Activated CD8-positive, alpha-beta T cell treated with anti-CD3 and anti-CD28 coated beads for 36 hours (primary cell): ENCODE measurements at regions of chr16 and their contacts with region 1.

Region 1: DNA sequence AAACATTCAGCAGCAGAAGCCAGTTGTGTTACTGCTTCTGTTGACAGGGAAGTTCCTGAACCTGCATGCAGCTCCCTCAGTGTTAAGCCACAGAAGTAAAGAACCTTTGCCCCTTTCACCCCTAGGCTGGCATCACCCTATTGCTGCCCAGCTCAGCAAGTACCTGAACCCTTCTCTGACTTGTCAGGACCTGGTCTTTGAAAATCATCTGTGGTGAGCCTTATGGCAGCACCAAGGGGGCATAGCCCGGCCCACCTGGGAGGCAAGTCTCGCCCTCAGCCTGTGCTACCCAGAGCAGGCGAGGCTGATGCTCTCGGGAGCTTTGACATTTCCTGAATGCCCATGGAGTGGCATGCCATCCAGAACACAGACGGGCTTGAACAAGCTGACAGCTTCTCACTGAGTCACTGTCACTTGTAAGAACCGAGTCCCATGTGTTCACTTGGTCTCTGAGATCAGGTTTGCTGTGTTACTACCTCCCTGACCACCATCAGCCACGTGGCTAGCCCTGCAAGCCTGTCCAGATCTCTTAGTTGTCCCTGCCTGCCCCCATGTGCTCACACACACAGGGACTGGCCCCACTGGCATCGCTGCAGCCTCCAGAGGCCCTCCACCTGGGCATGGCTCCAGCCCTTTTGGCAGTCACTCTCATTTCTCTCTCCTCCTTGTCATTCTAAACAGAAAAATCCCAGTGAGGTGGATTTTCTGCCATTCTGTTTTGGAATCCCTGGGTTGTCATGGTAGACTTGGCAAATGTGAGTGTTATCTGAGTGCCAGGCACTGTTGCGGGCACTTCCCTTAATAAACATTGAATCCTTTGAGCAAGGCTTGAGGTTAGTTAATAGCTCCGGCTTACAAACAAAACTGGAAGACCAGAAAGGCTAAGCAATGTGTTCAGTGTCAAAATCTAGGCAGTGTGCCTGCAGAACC is 2.9 kb upstream of the CARMIL2 start:
- DNase-seq: no peak
- ATAC-seq: no peak
- H3K4me3 Mint-ChIP-seq: no peak overlapping the region
- H3K27ac Mint-ChIP-seq: no peak overlapping the region
- H3K4me1 Mint-ChIP-seq: peaks cover 11% of the 10 kb centered on the region
- H3K27me3 Mint-ChIP-seq: no peaks in the 10 kb centered on the region
- CTCF ChIP-seq: no peak

Region 2: DNA sequence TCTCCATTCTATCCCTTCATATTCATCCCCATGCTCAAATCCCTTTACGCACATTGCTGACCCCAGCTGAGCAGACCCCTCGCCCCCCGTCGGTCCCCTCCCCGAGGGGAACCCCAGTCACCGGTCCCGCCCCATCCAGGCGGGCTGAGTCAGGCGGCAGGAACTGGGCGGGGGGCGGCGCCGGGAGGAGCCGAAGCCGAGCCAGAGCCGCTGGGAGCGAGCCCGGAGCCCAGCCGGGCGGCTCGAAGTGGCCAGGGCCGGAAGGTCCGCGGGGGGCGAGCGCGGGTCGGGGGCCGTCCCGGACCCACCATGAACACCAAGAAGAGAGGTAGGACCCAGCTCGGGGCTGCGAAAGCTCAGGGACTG is 104.8 kb before region 1 on chr16:
- CTCF ChIA-PET with region 1: interaction called, 12 read pairs
- POLR2A ChIA-PET with region 1: interaction called, 6 read pairs
- intact Hi-C with region 1: no loop called
- DNase-seq: peak; percentile 60
- ATAC-seq: peak; percentile 55
- H3K4me3 Mint-ChIP-seq: peak overlapping the region; percentile 74
- H3K27ac Mint-ChIP-seq: peak overlapping the region; percentile 73
- H3K4me1 Mint-ChIP-seq: peaks cover 31% of the 10 kb centered on the region
- H3K27me3 Mint-ChIP-seq: peaks cover 11% of the 10 kb centered on the region
- CTCF ChIP-seq: no peak

Region 3: DNA sequence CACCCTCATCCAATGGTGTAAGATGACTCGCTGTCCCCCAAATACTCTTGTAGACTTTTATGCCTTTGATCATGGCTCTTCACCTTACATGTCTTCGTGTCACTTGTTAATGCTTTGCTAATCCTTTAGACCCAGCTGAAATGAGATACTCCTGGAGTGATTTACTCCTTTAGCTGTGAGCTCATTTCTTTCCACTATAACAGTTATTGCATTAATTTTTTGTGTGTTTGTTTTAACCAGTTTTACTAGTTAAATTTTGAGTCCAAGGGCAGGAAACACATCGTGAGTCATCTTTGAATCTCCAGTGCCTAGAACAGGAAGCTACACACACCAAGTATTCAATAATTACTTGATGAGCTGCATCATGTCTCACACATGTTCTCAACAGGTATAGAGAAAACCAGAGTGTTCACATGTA is 86.2 kb before region 1 on chr16:
- CTCF ChIA-PET with region 1: interaction called, 43 read pairs
- POLR2A ChIA-PET with region 1: interaction called, 22 read pairs
- intact Hi-C with region 1: no loop called
- DNase-seq: no peak
- ATAC-seq: peak; percentile 94
- H3K4me3 Mint-ChIP-seq: peak overlapping the region; percentile 66
- H3K27ac Mint-ChIP-seq: peak overlapping the region; percentile 100
- H3K4me1 Mint-ChIP-seq: peaks cover 51% of the 10 kb centered on the region
- H3K27me3 Mint-ChIP-seq: no peaks in the 10 kb centered on the region
- CTCF ChIP-seq: no peak

Region 4: GRCh38 chr16:67571981-67572431 is 70.0 kb before region 1 on chr16:
- CTCF ChIA-PET with region 1: interaction called, 15 read pairs
- POLR2A ChIA-PET with region 1: no interaction called
- intact Hi-C with region 1: no loop called
- DNase-seq: no peak
- ATAC-seq: no peak
- H3K4me3 Mint-ChIP-seq: no peak overlapping the region
- H3K27ac Mint-ChIP-seq: peak overlapping the region; percentile 13
- H3K4me1 Mint-ChIP-seq: peaks cover 21% of the 10 kb centered on the region
- H3K27me3 Mint-ChIP-seq: no peaks in the 10 kb centered on the region
- CTCF ChIP-seq: no peak

Region 5: DNA sequence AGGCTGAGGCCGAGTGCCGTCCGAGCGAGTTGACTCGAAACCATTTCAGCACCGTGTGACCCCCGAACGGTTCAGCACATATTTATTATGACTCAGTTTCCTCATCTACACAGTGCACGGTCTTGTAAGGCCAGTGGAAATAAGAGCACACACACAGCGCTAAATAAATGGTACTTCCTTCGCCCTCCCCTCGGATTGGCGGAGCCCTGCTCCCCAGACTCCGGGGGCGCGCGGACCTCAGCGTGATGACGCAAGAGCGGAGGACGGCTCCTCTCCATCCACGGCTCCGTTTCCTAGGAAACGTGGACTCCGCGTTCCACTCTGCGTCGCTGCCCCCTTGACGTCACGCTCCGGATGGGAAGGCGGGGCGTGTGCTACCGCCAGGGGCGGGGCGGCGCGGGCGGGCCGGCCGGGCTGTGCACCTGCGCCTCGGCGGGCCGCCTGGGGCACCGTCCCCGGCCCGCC is 18.6 kb after region 1 on chr16 and contains the start of gene PARD6A:
- CTCF ChIA-PET with region 1: interaction called, 51 read pairs
- POLR2A ChIA-PET with region 1: interaction called, 100 read pairs
- intact Hi-C with region 1: no loop called
- DNase-seq: peak; percentile 98
- ATAC-seq: peak; percentile 82
- H3K4me3 Mint-ChIP-seq: peak within 1 kb of the TSS; percentile 90
- H3K27ac Mint-ChIP-seq: peak within 1 kb of the TSS; percentile 92
- H3K4me1 Mint-ChIP-seq: peaks cover 18% of the 10 kb centered on the region
- H3K27me3 Mint-ChIP-seq: no peaks in the 10 kb centered on the region
- CTCF ChIP-seq: no peak
- total RNA-seq, gene PARD6A: 6.3 to 7.2 TPM